AG04449 (cell line): ENCODE measurements at regions of chr10 and their contacts with region 1.

Region 1: GRCh38 chr10:71727738-71728737 is 8.5 kb upstream of the C10orf105 start:
- DNase-seq: no peak
- H3K4me3 ChIP-seq: no peak overlapping the region
- CTCF ChIP-seq: no peak

Region 2: GRCh38 chr10:71713135-71714030 is 14.7 kb before region 1 on chr10:
- CTCF ChIA-PET with region 1: interaction called, 13 read pairs
- POLR2A ChIA-PET with region 1: no interaction called
- DNase-seq: peak; percentile 4
- H3K4me3 ChIP-seq: no peak overlapping the region
- CTCF ChIP-seq: peak; percentile 20